ENCODE measurements at regions of chr2 and their contacts with region 1.

Region 1: DNA sequence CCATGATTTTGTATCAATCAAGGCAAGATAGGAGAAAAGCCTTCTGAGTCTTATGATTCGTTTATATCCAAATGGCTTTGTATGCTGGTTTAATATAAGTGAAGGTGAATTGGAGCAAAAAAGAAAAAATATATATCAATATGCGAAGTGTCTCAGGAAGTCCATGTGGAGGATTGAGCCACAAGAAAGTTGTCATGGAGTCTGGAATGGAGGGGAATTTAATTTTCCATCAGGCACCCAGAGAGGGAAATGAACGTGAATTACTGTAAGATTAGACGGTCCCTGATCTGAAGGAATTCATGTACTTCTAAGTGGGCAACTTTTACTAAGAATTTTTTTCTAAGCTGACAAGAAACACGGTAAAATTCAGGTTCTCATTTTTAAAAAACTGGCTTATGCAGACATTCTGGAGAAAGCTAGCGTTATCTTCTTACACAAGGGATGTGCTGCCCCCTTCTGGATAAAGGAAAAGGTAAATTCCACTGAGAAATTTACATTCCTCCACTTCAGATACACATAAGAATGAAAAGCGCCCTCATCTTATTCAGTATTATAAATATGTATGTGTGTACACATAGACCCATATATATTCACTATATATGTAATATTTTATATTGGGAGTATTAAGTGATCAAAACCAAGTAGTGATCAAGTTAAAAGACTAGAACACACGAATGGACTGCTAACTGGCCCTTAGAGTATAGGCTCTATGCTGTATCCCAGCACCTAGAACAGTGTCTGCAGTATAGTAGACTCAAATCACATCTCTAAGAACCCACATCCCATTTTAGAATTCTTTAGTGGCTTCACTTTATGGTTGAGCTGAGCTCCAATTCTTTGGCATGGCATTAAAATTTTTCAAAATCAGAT is 289.0 kb upstream of the TFPI start:
- DNase-seq: peak; percentile 55
- H3K4me3 ChIP-seq: no peak overlapping the region
- H3K27ac ChIP-seq: no peak overlapping the region
- H3K27me3 ChIP-seq: no peaks in the 10 kb centered on the region
- CTCF ChIP-seq: peak; percentile 63

Region 2: DNA sequence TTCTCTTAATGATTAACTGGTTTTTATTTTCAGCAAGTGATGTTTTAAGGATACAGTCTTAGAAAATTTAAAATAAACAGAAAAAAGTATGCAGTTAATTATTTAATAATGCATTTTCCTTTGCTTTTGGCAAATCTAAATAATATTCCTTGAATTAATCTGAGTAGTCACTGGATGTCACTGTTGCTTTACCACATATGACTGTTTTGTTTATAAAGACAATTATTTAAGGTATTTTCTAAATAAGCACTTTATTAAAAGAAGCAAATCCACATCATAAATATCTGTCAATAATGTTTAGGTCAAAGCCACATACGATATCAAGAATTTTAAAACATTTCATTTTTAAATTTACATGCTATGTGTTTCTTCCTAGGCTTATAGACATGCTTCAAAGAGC is 248.4 kb before region 1 on chr2:
- CTCF ChIA-PET with region 1: interaction called, 13 read pairs
- POLR2A ChIA-PET with region 1: no interaction called
- DNase-seq: no peak
- H3K4me3 ChIP-seq: no peak overlapping the region
- H3K27ac ChIP-seq: no peak overlapping the region
- H3K27me3 ChIP-seq: no peaks in the 10 kb centered on the region
- CTCF ChIP-seq: no peak

Region 3: DNA sequence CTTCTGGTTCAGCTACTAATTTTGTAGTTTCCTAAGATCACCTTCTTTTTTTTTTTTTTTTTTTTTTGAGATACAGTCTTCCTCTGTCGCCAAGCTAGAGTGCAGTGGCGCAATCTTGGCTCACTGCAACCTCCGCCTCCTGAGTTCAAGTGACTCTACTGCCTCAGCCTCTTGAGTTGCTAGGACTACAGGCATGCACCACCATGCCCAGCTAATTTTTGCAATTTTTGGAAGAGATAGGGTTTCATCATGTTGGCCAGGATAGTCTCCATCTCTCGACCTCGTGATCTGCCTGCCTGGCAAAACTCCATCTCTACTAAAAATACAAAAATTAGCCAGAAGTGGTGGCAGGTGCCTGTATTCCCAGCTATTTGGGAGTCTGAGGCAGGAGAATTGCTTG is 12.5 kb after region 1 on chr2:
- CTCF ChIA-PET with region 1: interaction called, 12 read pairs
- POLR2A ChIA-PET with region 1: no interaction called
- DNase-seq: no peak
- H3K4me3 ChIP-seq: no peak overlapping the region
- H3K27ac ChIP-seq: no peak overlapping the region
- H3K27me3 ChIP-seq: no peaks in the 10 kb centered on the region
- CTCF ChIP-seq: no peak

Measured in AG04450 (cell line).